ENCODE measurements at regions of chr2 and their contacts with region 1.

Region 1: GRCh38 chr2:105344704-105345345 is 7.5 kb downstream of the C2orf49 start:
- DNase-seq: no peak
- ATAC-seq: no peak
- H3K4me3 Mint-ChIP-seq: no peak overlapping the region
- H3K27ac Mint-ChIP-seq: no peak overlapping the region
- H3K4me1 Mint-ChIP-seq: no peaks in the 10 kb centered on the region
- H3K27me3 Mint-ChIP-seq: no peaks in the 10 kb centered on the region
- CTCF ChIP-seq: no peak

Region 2: DNA sequence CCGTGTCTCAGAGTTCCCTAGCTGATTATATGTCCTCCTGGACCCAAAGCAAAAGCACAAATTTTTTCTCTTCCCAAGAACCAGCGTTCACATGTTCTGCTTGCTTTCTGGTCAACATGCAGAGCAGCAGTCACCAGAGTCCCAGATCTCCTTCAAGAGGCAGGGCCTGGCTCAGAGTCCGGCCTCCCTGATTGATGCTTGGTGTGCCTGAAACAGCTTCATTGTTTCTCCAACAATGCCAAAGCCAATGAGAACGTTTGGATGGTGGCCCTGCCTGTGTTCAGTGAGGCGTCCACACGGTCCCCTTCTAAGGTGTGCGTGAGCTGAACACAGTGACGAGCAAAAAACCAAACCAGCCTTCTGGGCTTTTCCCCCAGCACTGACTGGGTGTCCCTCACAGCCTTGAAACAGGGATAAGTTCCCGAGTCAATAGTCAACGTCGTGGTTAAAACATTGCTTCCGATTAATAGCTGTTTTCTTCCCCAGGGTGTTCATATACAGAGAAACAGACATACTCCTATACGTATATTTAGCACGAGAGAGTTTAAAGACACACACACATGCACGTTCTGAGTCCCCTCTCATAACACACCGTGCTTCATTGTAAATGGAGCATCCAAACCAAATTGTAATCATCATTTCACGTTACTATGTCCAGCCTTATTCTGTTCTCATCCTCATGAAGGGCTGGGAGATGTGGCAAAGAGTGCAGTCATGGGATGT is 510.2 kb before region 1 on chr2:
- CTCF ChIA-PET with region 1: no interaction called
- POLR2A ChIA-PET with region 1: no interaction called
- intact Hi-C with region 1: no loop called
- DNase-seq: no peak
- ATAC-seq: no peak
- H3K4me3 Mint-ChIP-seq: no peak overlapping the region
- H3K27ac Mint-ChIP-seq: no peak overlapping the region
- H3K4me1 Mint-ChIP-seq: no peaks in the 10 kb centered on the region
- H3K27me3 Mint-ChIP-seq: peaks cover 23% of the 10 kb centered on the region
- CTCF ChIP-seq: no peak

Region 3: DNA sequence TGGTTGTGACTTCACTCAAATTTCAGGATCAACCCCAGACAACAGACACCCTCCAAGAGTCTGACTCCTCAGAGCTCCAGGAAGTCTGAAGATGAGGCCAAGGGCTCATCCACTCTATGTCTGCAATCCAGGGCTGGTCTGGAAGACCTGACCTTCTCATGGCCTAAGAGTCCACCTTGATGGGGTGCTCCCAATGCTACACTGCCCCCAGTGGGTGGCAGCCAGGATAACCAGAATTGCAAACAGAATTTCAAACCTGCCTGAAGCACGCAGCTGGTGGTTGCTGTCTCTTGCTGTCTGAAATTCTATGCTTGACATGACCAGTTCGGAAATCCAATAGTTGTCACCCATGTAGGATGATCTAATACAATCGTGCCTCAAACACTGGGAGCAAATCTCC is 753.3 kb after region 1 on chr2:
- CTCF ChIA-PET with region 1: no interaction called
- POLR2A ChIA-PET with region 1: no interaction called
- intact Hi-C with region 1: loop called (anchors 10 kb)
- DNase-seq: no peak
- ATAC-seq: no peak
- H3K4me3 Mint-ChIP-seq: no peak overlapping the region
- H3K27ac Mint-ChIP-seq: no peak overlapping the region
- H3K4me1 Mint-ChIP-seq: peaks cover 28% of the 10 kb centered on the region
- H3K27me3 Mint-ChIP-seq: no peaks in the 10 kb centered on the region
- CTCF ChIP-seq: no peak

Region 4: GRCh38 chr2:106516436-106516835 is 1171.6 kb after region 1 on chr2:
- CTCF ChIA-PET with region 1: no interaction called
- POLR2A ChIA-PET with region 1: no interaction called
- intact Hi-C with region 1: no loop called
- DNase-seq: no peak
- ATAC-seq: no peak
- H3K4me3 Mint-ChIP-seq: no peak overlapping the region
- H3K27ac Mint-ChIP-seq: no peak overlapping the region
- H3K4me1 Mint-ChIP-seq: no peaks in the 10 kb centered on the region
- H3K27me3 Mint-ChIP-seq: no peaks in the 10 kb centered on the region
- CTCF ChIP-seq: no peak

Region 5: DNA sequence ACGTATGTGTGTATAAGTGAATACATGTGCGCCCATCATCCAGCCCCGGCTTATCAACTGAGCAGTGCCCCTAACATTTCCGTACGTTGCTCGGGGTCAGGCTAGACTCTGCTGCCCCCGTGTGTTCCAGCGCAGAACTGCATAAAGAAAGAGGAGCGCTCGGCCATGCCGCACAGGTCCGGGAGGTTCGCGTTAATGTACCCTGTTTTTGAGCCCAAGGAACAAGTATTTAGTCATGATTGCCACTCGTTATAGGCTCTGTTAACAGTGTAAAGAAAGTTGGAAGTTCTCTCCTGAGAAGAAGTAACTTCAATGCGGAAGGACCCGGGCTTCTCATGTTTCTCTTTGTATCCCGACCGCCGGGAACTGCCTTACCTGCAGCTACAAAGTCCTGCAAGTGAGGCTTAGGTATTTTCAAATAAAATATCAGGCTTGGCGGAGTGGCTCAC is 1198.0 kb after region 1 on chr2:
- CTCF ChIA-PET with region 1: no interaction called
- POLR2A ChIA-PET with region 1: no interaction called
- intact Hi-C with region 1: loop called (anchors 1 kb)
- DNase-seq: peak; percentile 66
- ATAC-seq: peak; percentile 95
- H3K4me3 Mint-ChIP-seq: peak overlapping the region; percentile 58
- H3K27ac Mint-ChIP-seq: no peak overlapping the region
- H3K4me1 Mint-ChIP-seq: peaks cover 2% of the 10 kb centered on the region
- H3K27me3 Mint-ChIP-seq: peaks cover 21% of the 10 kb centered on the region
- CTCF ChIP-seq: peak; percentile 98